ENCODE measurements at regions of chrX and their contacts with region 1.

Region 1: GRCh38 chrX:96770315-96770714 is 85.7 kb downstream of the DIAPH2 start:
- DNase-seq: no peak
- H3K4me3 ChIP-seq: no peak overlapping the region
- H3K27ac ChIP-seq: no peak overlapping the region
- H3K27me3 ChIP-seq: no peaks in the 10 kb centered on the region
- CTCF ChIP-seq: peak; percentile 44

Region 2: DNA sequence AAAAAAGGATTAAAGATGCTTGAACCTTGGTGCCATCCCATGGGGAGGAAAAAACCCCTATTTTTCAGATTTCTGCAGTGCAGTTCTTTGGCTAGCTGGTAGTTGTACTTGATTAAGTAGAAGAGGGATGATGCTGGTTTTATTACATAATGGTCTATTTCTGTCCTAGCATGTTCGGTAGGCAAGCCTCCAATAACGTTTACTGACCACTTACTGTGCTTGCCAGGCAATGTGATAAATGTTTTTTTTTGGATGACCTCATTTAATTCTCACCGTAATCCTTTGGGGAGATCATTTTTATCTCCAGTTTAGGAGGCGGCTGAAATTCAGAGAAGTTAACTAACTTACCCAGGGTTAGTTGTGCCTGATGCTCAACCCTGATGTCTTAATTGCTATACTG is 21.2 kb after region 1 on chrX:
- CTCF ChIA-PET with region 1: interaction called, 11 read pairs
- POLR2A ChIA-PET with region 1: no interaction called
- DNase-seq: no peak
- H3K4me3 ChIP-seq: no peak overlapping the region
- H3K27ac ChIP-seq: no peak overlapping the region
- H3K27me3 ChIP-seq: no peaks in the 10 kb centered on the region
- CTCF ChIP-seq: no peak

Region 3: DNA sequence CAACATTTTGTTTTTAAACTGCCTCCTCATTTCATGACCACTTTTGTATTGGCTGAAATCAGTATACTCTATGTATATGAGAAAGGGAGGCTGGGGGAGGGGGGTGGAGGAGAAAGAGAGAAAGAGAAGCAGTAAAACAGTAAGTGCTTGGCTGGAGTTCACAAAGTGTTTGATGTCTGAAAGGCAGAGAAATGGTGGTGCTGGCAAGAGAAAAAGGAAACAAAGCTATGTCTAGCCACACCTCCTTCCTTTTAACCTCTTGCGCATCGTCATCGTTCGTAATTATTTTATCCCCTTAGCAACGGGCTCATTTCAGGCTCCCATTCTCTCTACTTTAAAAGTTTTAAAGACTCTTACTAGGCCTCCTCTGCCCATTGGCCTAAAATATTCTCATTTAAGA is 139.0 kb after region 1 on chrX:
- CTCF ChIA-PET with region 1: no interaction called
- POLR2A ChIA-PET with region 1: no interaction called
- DNase-seq: no peak
- H3K4me3 ChIP-seq: no peak overlapping the region
- H3K27ac ChIP-seq: peak overlapping the region; percentile 62
- H3K27me3 ChIP-seq: no peaks in the 10 kb centered on the region
- CTCF ChIP-seq: no peak

Measured in AG04450 (cell line).